Activated CD4-positive, alpha-beta T cell treated with anti-CD3 and anti-CD28 coated beads for 36 hours (primary cell): ENCODE measurements at regions of chr1 and their contacts with region 1.

Region 1: DNA sequence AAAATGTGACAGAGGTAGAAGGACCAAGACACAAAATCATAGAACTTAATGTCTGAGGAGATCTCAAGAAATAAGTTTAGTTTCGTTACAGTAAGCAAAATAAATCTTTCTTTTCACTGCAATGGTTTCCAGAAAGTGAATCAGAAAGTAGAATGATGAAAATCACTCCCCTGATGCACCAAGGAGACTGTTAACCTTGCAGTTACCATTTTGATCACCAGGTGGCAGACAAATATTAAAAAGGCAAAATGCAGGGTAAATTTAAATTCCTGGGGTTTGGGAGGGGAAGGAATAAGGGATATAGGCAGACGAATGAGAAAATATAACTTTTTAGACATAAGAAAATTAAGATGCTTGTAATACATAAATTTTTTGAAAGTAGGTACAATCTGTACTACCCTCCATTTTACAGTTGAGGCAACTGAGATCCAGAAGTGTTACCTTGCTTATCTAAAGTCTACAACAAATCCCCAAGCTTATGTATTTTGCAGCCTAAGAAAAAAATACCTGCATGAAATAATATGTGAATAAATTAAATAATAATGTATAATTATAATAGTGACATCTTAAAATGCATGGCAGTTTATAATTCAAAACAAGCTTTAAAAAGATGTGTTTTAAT is 253.2 kb downstream of the CRB1 start:
- DNase-seq: peak; percentile 13
- ATAC-seq: peak; percentile 65
- H3K4me3 Mint-ChIP-seq: no peak overlapping the region
- H3K27ac Mint-ChIP-seq: no peak overlapping the region
- H3K4me1 Mint-ChIP-seq: peaks cover 6% of the 10 kb centered on the region
- H3K27me3 Mint-ChIP-seq: no peaks in the 10 kb centered on the region

Region 2: GRCh38 chr1:197180252-197180878 is 340.9 kb before region 1 on chr1:
- CTCF ChIA-PET with region 1: interaction called, 3 read pairs
- POLR2A ChIA-PET with region 1: no interaction called
- intact Hi-C with region 1: loop called in 1 of 2 experiments (anchors 5 kb)
- DNase-seq: no peak
- ATAC-seq: peak; percentile 19
- H3K4me3 Mint-ChIP-seq: no peak overlapping the region
- H3K27ac Mint-ChIP-seq: no peak overlapping the region
- H3K4me1 Mint-ChIP-seq: peaks cover 3% of the 10 kb centered on the region
- H3K27me3 Mint-ChIP-seq: no peaks in the 10 kb centered on the region

Region 3: DNA sequence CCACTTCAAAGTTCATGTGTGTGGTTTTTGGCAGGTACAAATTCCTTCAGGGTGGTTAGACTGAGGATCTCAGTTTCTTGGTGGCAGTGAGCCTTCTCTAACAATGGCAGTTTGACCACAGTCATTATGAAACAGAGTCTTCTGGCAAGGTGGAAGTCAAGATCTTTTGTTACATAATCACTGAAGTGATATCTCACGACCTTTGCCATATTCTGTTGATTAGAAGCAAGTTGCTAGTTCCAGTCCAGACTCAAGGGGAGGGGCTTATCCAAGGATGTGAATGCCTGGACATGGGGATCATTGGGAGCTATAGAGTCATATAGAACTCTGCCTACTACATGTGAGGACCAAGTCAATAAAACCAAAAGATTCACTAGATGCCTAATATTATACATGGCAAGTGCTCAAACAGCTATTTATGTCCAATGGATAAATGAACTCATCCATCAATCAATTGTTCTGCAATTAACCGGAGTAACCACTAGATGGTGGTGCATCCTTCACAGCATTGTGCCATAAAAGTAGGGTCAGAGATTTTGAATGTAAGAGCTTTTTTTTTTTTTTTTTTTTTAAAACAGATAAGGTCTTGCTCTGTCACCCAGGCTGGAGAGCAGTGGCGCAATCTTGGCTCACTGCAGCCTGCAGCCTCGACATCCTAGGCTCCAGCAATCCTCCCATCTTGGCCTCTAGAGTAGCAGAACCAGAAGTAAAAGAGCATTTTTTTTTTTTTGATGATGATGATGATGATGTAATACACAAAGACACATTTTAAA is 121.3 kb before region 1 on chr1:
- CTCF ChIA-PET with region 1: interaction called, 4 read pairs
- POLR2A ChIA-PET with region 1: no interaction called
- intact Hi-C with region 1: loop called in 1 of 2 experiments (anchors 2 kb)
- DNase-seq: peak; percentile 26
- ATAC-seq: peak; percentile 70
- H3K4me3 Mint-ChIP-seq: no peak overlapping the region
- H3K27ac Mint-ChIP-seq: no peak overlapping the region
- H3K4me1 Mint-ChIP-seq: peaks cover 3% of the 10 kb centered on the region
- H3K27me3 Mint-ChIP-seq: peaks cover 6% of the 10 kb centered on the region

Region 4: DNA sequence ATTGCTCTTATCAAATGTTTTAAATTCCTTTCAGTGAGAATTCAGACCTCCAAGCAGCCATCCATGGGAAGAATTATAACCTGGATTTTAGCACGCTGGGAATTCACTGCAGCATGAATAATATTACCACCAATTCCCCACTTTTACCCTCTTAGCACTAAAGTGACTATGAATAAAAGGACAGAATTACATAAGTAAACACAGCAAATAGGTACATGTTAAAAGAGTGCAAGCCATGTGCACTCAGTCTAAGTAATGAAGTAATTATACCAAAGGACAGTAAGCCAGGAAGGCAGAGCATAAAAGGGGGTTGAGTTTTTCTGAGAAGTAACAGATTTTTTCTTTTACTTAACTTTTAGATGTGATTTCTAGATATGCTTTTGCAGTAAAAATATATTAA is 77.7 kb after region 1 on chr1:
- CTCF ChIA-PET with region 1: no interaction called
- POLR2A ChIA-PET with region 1: no interaction called
- intact Hi-C with region 1: no loop called
- DNase-seq: no peak
- ATAC-seq: no peak
- H3K4me3 Mint-ChIP-seq: no peak overlapping the region
- H3K27ac Mint-ChIP-seq: no peak overlapping the region
- H3K4me1 Mint-ChIP-seq: no peaks in the 10 kb centered on the region
- H3K27me3 Mint-ChIP-seq: no peaks in the 10 kb centered on the region

Region 5: GRCh38 chr1:197868751-197869489 is 347.7 kb after region 1 on chr1:
- CTCF ChIA-PET with region 1: interaction called, 20 read pairs
- POLR2A ChIA-PET with region 1: no interaction called
- intact Hi-C with region 1: loop called (anchors 1 kb)
- DNase-seq: peak; percentile 54
- ATAC-seq: peak; percentile 94
- H3K4me3 Mint-ChIP-seq: no peak overlapping the region
- H3K27ac Mint-ChIP-seq: no peak overlapping the region
- H3K4me1 Mint-ChIP-seq: peaks cover 3% of the 10 kb centered on the region
- H3K27me3 Mint-ChIP-seq: no peaks in the 10 kb centered on the region

Region 6: DNA sequence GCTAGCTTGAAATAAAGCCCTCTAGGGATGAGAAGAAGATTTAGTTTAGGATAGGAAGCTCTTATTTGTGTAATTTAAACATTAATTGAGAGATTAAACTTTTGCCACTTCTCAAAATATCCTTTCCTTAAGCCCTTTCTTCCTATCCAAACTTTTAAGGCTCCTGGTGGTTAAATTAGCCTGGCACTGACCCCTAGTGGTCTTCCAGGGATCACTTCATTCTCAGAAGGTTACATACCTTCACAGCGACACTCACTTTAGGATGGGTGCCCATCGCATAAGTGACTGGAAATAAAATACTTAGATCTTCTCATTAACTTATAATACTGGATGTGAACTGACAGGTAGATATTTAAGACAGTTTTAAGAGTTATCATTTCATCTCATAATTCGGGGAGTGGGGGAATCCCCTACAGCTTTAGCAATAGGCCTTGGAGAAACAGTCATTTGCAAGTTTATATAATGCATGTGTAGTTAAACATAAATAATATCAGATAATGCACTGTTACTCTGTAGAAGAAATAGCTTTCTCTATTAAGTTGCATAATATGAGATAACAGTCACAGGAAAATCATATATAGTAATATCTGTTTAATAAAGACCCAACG is 403.4 kb after region 1 on chr1:
- CTCF ChIA-PET with region 1: interaction called, 20 read pairs
- POLR2A ChIA-PET with region 1: no interaction called
- intact Hi-C with region 1: loop called (anchors 2 kb)
- DNase-seq: peak; percentile 54
- ATAC-seq: peak; percentile 70
- H3K4me3 Mint-ChIP-seq: no peak overlapping the region
- H3K27ac Mint-ChIP-seq: no peak overlapping the region
- H3K4me1 Mint-ChIP-seq: peaks cover 21% of the 10 kb centered on the region
- H3K27me3 Mint-ChIP-seq: peaks cover 64% of the 10 kb centered on the region

Region 7: DNA sequence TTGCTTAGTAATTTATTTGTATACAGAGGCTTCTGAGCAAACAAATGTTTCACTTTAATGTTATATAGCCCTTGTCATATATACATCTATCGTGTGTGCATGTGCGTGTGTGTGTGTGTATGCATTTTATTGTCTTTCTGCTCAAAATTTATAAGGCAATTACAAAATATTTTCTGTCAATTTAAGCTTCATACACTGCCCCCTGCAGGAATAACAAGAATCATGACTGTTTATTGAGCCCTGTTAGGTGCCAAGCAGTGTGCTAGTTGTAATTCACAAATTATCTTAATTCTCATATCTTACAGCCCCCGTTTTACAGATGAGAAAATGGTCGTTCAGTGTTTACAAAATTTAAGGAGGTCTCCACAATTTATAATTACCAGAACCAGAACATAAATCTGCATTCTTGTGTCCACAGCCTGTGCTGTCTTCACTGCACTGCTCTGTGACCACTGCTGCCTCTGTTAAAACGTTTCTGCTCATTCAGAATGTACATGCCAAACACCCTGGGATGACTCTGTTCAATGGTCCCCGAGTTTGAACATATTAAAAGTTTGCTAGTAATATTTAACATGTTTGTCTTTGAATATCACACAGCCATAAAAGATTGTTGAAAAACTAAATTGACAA is 837.9 kb after region 1 on chr1:
- CTCF ChIA-PET with region 1: no interaction called
- POLR2A ChIA-PET with region 1: no interaction called
- intact Hi-C with region 1: loop called in 1 of 2 experiments (anchors 10 kb)
- DNase-seq: no peak
- ATAC-seq: no peak
- H3K4me3 Mint-ChIP-seq: no peak overlapping the region
- H3K27ac Mint-ChIP-seq: no peak overlapping the region
- H3K4me1 Mint-ChIP-seq: peaks cover 5% of the 10 kb centered on the region
- H3K27me3 Mint-ChIP-seq: no peaks in the 10 kb centered on the region